ENCODE measurements at regions of chr4 and their contacts with region 1.

Region 1: DNA sequence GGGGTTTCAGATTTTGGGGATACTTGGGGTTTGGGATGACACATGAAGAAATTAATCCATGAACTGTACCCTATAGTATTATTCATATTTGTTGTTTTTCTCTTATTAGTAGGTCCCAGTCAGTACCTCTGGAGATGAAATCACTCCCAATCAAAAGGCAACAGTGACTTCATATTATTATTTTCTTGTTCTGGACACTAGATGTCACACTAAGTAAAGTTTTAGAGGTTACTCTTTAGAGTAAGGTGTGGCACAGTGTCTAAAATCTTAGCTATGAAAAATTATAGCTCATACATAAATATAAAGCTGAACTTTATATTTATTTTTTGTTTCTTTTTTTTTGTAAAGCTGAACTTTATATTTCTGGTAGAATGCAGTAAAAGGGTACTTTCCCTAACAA is 35.1 kb downstream of the FAM114A1 start:
- H3K4me3 ChIP-seq: no peak overlapping the region
- H3K27ac ChIP-seq: no peak overlapping the region
- H3K4me1 ChIP-seq: no peaks in the 10 kb centered on the region
- CTCF ChIP-seq: no peak

Region 2: GRCh38 chr4:38562751-38563198 is 339.9 kb before region 1 on chr4:
- CTCF ChIA-PET with region 1: no interaction called
- POLR2A ChIA-PET with region 1: no interaction called
- H3K4me3 ChIP-seq: no peak overlapping the region
- H3K27ac ChIP-seq: no peak overlapping the region
- H3K4me1 ChIP-seq: no peaks in the 10 kb centered on the region
- CTCF ChIP-seq: no peak

Region 3: DNA sequence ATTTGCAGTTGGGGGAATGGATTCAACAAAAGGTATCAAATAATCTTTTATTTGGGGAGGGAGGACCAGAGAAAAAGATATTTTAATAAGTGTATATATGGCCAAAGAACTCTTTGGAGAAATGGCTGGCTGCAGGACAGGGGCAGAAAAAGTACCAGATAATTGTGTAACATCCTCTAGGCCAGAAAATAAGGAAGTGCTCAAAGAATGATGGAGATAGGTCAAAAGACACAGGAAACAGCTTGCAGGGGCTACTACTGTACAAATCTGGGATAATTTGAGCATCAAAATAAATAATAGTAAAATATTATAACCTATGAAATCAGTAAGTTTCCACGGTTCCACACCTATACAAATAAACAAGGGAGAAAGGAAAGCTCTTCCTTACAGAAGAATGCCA is 194.2 kb after region 1 on chr4:
- CTCF ChIA-PET with region 1: no interaction called
- POLR2A ChIA-PET with region 1: no interaction called
- H3K4me3 ChIP-seq: no peak overlapping the region
- H3K27ac ChIP-seq: no peak overlapping the region
- H3K4me1 ChIP-seq: no peaks in the 10 kb centered on the region
- CTCF ChIP-seq: no peak

Region 4: DNA sequence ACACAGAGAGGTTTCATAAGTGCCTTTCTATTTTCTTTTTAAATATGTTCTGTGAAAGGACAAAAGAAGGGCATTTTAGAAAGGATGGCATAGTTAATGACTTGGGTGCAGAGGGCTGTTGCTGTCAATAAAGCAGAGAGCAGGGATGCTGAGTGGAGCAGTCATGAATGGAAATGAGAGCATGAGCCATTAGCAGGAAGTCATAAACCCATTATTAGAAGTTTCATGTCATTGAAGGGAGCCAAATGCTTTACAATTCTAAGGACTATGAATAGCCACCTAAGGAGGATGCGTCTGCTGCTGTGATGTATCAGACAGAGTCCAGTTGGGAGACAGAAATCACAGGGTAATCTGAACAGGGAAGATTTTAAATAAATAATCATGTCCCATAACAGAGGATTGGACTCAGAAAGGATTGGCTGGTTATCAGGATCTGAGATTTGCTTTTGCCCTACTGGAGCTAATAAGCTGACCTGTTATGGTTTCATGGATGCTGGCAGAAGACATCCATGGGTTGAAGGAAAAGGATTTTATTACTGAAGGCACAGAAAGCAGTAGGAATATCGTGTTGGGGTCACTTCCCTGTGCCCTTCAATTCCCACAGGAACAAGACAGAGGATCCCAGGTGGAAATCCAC is 232.1 kb after region 1 on chr4:
- CTCF ChIA-PET with region 1: interaction called, 87 read pairs
- POLR2A ChIA-PET with region 1: no interaction called
- H3K4me3 ChIP-seq: no peak overlapping the region
- H3K27ac ChIP-seq: no peak overlapping the region
- H3K4me1 ChIP-seq: no peaks in the 10 kb centered on the region
- CTCF ChIP-seq: no peak